Calu3 (cell line): ENCODE measurements at regions of chr10 and their contacts with region 1.

Region 1: GRCh38 chr10:16891375-16892313 is 74.4 kb upstream of the RSU1 start:
- DNase-seq: peak; percentile 58
- H3K4me3 Mint-ChIP-seq: peak overlapping the region; percentile 68
- H3K27ac Mint-ChIP-seq: peak overlapping the region; percentile 99
- H3K4me1 Mint-ChIP-seq: peaks cover 23% of the 10 kb centered on the region
- H3K27me3 Mint-ChIP-seq: no peaks in the 10 kb centered on the region
- CTCF ChIP-seq: no peak

Region 2: GRCh38 chr10:16944402-16944801 is 52.8 kb after region 1 on chr10:
- CTCF ChIA-PET with region 1: no interaction called
- intact Hi-C with region 1: no loop called
- DNase-seq: no peak
- H3K4me3 Mint-ChIP-seq: no peak overlapping the region
- H3K27ac Mint-ChIP-seq: no peak overlapping the region
- H3K4me1 Mint-ChIP-seq: peaks cover 6% of the 10 kb centered on the region
- H3K27me3 Mint-ChIP-seq: no peaks in the 10 kb centered on the region
- CTCF ChIP-seq: no peak

Region 3: DNA sequence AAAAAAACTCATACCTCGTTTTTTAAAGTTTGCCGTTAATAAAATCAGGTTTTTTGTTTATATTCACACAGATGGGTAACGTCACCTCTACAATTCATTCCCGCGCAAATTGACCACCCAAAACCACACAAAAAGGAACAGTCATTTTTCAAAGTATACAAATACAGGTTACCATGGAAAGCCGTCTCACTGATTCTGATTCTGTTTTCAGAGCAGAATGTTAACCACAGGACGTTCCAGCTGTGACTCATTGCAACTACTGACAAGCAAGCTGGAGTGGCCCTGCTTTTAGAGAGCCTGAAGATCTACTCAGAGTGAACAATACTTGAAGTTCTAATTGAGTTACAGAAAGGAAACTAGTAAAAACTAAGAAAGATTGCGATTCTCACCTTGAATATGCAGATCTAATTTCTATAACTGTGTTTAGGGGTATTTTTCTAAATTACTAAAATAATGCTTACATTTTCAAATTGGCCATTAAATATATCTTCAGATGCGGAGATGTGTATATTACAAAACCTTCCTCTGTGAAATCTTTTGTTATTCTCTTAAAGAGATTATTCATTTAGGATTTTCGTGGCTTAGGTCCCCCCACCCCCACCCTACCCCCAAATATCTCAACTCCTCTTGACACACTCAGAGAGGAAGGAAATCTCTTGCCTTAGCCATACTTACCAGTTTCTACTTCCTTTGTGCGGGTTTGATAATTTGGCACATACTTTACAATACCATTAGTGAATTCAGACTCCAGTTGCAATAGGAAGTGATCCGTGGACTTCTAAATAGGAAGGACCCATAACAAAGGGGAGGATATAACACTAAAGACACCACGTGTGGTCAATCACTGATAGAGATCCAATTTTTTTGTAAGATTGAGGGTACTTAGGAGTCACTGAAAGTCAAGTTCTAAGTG is 132.0 kb after region 1 on chr10:
- CTCF ChIA-PET with region 1: no interaction called
- intact Hi-C with region 1: loop called (anchors 5 kb)
- DNase-seq: peak; percentile 61
- H3K4me3 Mint-ChIP-seq: no peak overlapping the region
- H3K27ac Mint-ChIP-seq: peak overlapping the region; percentile 21
- H3K4me1 Mint-ChIP-seq: peaks cover 8% of the 10 kb centered on the region
- H3K27me3 Mint-ChIP-seq: no peaks in the 10 kb centered on the region
- CTCF ChIP-seq: no peak

Region 4: DNA sequence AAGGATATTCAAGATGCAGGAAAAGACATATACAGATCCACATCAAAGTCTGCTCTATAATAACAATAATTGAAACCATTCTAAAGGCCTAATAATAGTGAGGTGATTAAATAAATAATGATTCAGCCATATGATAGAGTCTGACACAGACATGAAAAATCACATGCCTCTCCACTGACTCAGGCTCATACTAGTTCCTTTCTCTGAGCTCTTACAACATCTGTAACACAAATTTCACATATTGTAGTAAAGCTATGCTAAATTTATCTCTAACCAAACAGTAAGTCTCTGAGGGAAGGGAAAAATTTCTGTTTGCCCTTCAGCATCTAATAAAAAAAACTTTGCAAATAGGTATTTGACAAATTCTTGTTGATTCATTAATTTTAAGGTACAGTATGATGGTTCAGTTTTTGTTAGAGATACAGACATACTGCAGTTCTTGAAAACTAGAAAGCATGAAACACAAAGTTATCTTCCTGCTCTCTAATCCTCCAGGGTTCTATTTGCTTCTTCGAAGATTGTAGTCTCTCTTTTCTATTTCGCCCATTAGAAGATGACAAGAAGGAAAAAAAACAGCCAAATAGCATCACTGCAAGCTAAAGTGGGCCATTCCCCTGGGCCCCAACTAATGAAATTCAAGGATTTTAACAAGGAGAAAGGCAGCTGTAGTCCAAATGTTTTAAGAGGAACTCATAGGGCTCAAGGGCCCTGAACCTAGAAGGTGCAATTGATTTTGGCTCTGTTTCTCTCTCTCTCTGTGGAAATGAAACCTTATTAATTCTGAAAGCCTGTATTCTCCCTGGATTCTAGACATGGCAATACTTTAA is 184.1 kb after region 1 on chr10:
- CTCF ChIA-PET with region 1: no interaction called
- intact Hi-C with region 1: loop called (anchors 5 kb)
- DNase-seq: peak; percentile 20
- H3K4me3 Mint-ChIP-seq: no peak overlapping the region
- H3K27ac Mint-ChIP-seq: peak overlapping the region; percentile 81
- H3K4me1 Mint-ChIP-seq: peaks cover 8% of the 10 kb centered on the region
- H3K27me3 Mint-ChIP-seq: no peaks in the 10 kb centered on the region
- CTCF ChIP-seq: no peak

Region 5: GRCh38 chr10:17179002-17179401 is 287.4 kb after region 1 on chr10:
- CTCF ChIA-PET with region 1: no interaction called
- intact Hi-C with region 1: loop called (anchors 2 kb)
- DNase-seq: no peak
- H3K4me3 Mint-ChIP-seq: no peak overlapping the region
- H3K27ac Mint-ChIP-seq: no peak overlapping the region
- H3K4me1 Mint-ChIP-seq: peaks cover 23% of the 10 kb centered on the region
- H3K27me3 Mint-ChIP-seq: no peaks in the 10 kb centered on the region
- CTCF ChIP-seq: no peak

Region 6: GRCh38 chr10:17250736-17251135 is 359.1 kb after region 1 on chr10:
- CTCF ChIA-PET with region 1: no interaction called
- intact Hi-C with region 1: loop called (anchors 1 kb)
- DNase-seq: no peak
- H3K4me3 Mint-ChIP-seq: no peak overlapping the region
- H3K27ac Mint-ChIP-seq: no peak overlapping the region
- H3K4me1 Mint-ChIP-seq: peaks cover 8% of the 10 kb centered on the region
- H3K27me3 Mint-ChIP-seq: peaks cover 23% of the 10 kb centered on the region
- CTCF ChIP-seq: no peak